ENCODE measurements at regions of chr5 and their contacts with region 1.

Region 1: DNA sequence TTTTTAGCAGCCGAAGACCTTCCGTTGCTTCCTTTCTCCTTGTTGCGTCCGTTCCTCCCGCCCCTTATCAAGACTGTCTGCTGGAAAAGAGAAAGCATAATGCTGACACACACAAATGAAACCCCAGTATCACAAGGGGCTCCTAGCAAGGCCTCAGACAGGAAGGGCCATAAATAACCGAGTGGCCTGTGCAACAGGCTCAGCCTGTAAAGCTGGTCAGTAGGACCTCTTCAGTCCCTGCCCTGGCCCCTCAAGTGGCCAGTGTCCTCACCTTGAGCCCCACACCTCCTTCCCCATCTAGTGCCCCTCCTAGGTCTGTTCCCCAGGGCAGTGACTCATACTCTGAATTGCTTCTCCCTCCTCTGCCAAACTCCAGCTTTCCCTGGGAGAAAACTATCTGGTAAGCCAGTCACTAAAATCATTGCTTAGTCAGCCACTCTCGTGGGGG is 174.6 kb upstream of the IL12B start:
- DNase-seq: peak; percentile 45 to 68 (median 61)
- H3K4me3 ChIP-seq: no peak overlapping the region
- H3K27ac ChIP-seq: peak overlapping the region; percentile 23 to 85
- H3K4me1 ChIP-seq: peaks cover 6% of the 10 kb centered on the region
- H3K27me3 ChIP-seq: no peaks in the 10 kb centered on the region
- CTCF ChIP-seq: no peak
- EP300 ChIP-seq: no peak
- POLR2A ChIP-seq: no peak

Region 2: DNA sequence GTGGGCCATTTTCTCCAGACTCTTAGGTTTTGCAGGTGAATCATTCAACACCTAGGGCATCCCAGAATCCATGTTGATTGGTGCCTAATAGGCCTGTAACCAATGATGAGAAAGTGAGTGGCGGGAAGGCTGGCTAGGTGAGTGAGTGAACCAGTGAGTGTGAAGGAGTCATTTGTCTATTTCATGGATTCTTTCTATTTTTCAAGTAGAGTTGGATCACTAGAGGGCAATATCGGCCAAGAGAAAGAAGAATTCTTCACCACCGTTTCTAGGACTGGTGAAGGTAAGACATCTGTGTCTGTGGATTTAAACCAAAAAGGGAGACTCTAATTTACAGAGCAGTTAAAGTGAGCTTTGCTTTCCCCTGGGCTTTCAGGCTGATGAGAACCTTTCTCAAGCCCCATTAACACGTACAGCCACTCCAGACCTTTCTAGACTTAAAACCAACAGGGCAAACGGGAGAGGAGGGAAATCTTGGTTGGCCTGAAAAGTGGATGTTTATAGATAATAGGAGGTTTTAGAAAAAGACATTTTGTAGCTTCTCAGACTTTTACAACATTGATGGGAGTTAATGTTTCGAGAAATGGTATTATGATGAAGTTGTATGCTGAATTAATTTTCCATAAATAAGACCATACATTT is 60.3 kb before region 1 on chr5:
- intact Hi-C with region 1: loop called in 1 of 4 experiments (anchors 2 kb)
- DNase-seq: no peak
- H3K4me3 ChIP-seq: no peak overlapping the region
- H3K27ac ChIP-seq: no peak overlapping the region
- H3K4me1 ChIP-seq: no peaks in the 10 kb centered on the region
- H3K27me3 ChIP-seq: no peaks in the 10 kb centered on the region
- CTCF ChIP-seq: peak; percentile 13 to 57 (median 53)
- EP300 ChIP-seq: no peak
- POLR2A ChIP-seq: no peak